Activated T-helper 1 cell treated with anti-CD3 and anti-CD28 coated beads, Interleukin-12 subunit alpha, Interleukin-12 subunit beta, Interleukin-2, Interleukin-4 antibody, amounts not matched to agents 30 ng/mL and 10 ng/mL and 1 ng/mL, durations not matched to agents 14 hours and 24 hours and 36 hours (primary cell): ENCODE measurements at regions of chr6 and their contacts with region 1.

Region 1: DNA sequence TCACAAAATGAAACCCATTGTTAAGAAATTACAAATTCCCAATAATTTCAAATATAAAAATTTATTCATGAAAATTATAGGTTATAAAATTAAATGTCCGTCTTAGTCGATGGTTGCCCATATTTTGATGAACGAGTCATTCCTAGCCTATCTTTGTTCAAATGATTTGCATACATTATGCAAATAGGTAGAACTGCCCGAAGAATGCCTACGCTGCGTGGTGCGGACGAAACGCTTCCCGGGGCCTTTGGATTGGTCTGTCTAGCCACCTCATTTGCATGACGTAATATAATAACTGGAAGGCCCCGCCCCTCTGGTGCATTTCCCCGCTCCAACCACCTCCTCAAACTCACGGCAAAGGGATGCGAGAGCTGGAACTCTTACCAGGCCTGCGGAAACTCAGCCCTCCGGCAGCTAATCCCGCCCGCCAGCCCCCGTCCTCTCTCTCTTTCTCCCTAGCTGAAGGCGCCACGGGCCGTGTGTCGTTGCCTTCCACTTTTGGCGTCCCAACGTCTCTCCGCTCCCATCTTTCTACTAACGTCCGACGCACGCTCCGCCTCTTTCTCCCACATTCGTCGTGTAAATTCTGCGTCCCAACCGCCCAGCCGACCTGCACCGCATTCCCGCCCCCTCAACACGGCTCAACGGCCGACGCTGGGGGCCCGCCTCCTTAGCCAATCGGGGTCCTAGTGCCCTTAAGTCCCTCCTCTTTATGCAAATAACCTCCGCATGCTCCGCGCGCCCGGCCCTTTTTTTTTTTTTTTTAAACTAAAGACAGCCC is 520 bp upstream of the PRRC2A start:
- DNase-seq: peak; percentile 98
- H3K4me3 Mint-ChIP-seq: peak overlapping the region; percentile 79
- H3K27ac Mint-ChIP-seq: peak overlapping the region; percentile 98
- H3K4me1 Mint-ChIP-seq: peaks cover 43% of the 10 kb centered on the region
- H3K27me3 Mint-ChIP-seq: no peaks in the 10 kb centered on the region

Region 2: DNA sequence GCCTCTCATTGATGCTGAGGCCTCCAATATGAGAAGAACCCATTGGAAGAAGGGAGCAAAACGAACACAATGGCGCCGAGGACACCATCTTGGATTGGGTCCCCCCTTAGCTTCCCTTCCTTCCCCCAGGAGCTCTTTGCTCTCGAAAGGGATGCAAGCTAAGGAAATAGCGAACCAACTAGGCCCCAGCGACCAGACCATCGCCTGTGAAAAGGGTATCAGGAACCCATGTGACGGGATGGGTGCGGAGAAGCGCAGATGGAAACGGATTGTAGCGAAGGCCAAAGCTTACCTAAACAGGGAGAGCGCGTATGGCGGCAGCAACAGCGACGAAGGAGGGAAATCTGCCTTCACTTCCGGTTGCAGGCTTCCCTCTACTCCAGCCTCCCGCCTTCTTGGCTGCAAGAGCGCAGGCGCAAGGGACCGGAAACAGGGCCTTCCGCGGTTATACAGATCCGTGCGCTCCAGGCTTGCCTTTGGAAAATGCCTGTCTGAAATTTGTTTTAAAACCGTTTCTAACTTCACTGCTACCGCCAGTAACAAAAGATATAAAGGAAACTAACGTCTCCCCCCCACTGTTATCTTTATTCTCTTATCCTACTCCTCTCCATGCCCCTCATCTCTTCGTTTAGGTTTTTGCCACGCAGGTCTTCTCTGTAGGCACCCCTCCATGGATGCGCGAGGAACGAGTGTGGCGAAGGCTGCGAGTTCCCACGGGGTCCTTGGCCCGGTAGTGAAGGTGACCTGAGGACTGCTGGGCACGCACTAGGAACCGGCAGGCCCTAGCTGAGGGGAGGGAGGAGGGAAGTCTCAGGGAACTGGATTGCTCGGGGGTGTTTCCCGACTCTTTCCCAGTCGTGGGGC is 78.1 kb before region 1 on chr6 and contains the start of gene DDX39B:
- intact Hi-C with region 1: loop called (anchors 1 kb)
- DNase-seq: peak; percentile 92
- H3K4me3 Mint-ChIP-seq: peak within 1 kb of the TSS; percentile 100
- H3K27ac Mint-ChIP-seq: peak within 1 kb of the TSS; percentile 97
- H3K4me1 Mint-ChIP-seq: peaks cover 41% of the 10 kb centered on the region
- H3K27me3 Mint-ChIP-seq: peaks cover 3% of the 10 kb centered on the region
- total RNA-seq, gene DDX39B: 628 and 637 TPM in 2 replicates

Region 3: DNA sequence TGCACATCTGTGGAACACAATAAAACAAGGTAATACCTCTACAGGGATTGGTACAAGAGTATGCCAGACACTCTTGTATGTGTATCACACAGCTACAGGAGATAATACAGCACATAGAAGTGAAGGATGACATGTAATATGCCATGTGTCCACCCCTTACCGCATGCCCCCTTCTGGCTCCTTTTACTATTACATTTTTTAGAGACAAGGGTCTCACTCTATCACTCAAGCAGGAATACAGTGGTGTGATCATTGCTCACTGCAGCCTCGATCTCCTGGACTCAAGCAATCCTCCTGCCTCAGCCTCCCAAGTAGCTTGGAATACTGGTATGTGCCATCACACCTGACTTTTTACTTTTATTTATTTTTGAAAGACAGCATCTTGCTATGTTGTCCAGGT is 23.0 kb before region 1 on chr6:
- intact Hi-C with region 1: loop called (anchors 1 kb)
- DNase-seq: no peak
- H3K4me3 Mint-ChIP-seq: no peak overlapping the region
- H3K27ac Mint-ChIP-seq: no peak overlapping the region
- H3K4me1 Mint-ChIP-seq: peaks cover 52% of the 10 kb centered on the region
- H3K27me3 Mint-ChIP-seq: no peaks in the 10 kb centered on the region

Region 4: GRCh38 chr6:31607317-31607716 is 12.7 kb before region 1 on chr6:
- intact Hi-C with region 1: no loop called
- DNase-seq: no peak
- H3K4me3 Mint-ChIP-seq: no peak overlapping the region
- H3K27ac Mint-ChIP-seq: no peak overlapping the region
- H3K4me1 Mint-ChIP-seq: no peaks in the 10 kb centered on the region
- H3K27me3 Mint-ChIP-seq: peaks cover 2% of the 10 kb centered on the region

Region 5: DNA sequence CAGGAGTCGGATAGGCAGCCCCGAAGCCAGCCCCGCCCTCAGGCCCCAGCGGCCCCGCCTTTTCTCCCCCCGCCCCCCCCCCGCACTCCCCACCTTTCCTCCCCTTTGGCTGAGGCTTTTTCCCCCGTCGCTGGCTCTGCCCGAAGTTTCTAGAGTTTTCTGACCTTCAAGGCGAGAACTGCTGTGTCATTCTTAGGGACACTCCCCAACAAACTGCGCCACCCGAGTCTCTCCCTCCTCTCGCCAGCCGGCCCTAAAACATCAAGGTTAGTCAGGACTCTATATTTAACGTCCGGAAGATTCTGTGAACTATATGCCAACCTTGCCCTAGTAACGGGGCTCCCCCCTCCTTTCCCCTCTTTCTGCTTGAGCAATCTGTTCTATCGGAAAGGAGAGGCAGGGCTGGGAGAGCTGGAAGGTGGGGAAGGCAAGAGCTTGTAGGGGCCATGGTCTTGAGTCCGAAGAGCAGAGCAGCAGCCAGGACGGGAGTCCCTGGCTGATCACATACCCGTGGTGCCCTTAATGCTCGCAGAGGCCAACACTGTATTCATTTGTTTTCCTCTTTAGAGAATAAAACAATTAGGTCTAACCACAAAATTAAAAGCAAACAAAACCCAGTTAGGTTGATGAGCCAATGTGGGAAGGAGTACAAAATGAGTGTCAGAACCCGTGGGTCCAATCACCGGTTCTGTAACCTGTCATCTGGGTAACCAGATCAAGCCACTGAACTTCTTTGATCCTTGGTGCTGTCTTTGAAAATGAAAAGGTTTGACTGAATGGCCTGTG is 202.2 kb after region 1 on chr6:
- intact Hi-C with region 1: loop called (anchors 2 kb)
- DNase-seq: peak; percentile 44
- H3K4me3 Mint-ChIP-seq: peak overlapping the region; percentile 99
- H3K27ac Mint-ChIP-seq: peak overlapping the region; percentile 99
- H3K4me1 Mint-ChIP-seq: peaks cover 73% of the 10 kb centered on the region
- H3K27me3 Mint-ChIP-seq: no peaks in the 10 kb centered on the region

Region 6: DNA sequence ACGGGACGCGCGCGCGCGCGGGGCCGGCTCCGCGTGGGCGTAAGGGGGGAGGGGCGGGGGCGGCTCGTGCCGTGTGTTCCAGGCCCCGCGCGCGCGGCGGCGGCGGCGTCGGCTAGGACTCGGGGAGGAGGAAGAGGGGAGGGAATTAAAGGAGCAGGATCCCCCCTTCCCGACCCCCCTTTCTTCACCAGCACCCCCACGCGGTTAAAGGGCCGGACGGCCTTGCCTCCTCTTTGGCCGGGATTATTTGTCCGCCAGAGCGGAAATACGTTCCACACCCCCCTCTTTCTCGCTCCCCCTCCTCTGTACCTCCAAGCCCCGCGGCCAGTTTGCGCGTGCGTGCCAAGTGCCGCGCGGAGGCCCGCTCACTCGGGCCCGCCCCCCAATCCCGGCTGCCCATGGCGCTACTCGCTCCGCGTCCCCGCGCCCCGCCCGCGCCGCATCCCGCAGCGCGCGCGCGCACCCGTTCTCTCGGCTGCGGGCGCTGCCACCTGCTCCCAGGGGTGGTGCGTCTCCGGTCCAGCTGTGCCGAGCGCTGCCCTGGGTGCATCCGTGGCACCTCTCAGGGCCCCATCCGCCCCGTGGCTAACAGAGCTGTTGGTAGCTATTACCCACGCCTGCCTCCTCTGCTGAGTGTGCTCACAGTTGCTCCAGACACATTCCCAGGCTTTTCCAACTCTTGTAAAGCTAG is 282.1 kb after region 1 on chr6 and contains the start of gene ZBTB12:
- intact Hi-C with region 1: loop called (anchors 2 kb)
- DNase-seq: peak; percentile 82
- H3K4me3 Mint-ChIP-seq: peak within 1 kb of the TSS; percentile 81
- H3K27ac Mint-ChIP-seq: peak within 1 kb of the TSS; percentile 88
- H3K4me1 Mint-ChIP-seq: peaks cover 37% of the 10 kb centered on the region
- H3K27me3 Mint-ChIP-seq: no peaks in the 10 kb centered on the region
- total RNA-seq, gene ZBTB12: 4.6 and 5.1 TPM in 2 replicates